ENCODE measurements at regions of chr7 and their contacts with region 1.

Region 1: GRCh38 chr7:16762177-16762576 is 8.6 kb downstream of the TSPAN13 start:
- DNase-seq: no peak
- H3K4me3 ChIP-seq: no peak overlapping the region
- CTCF ChIP-seq: no peak

Region 2: GRCh38 chr7:16670021-16670420 is 92.2 kb before region 1 on chr7:
- in situ Hi-C with region 1: loop called (anchors 5 kb)
- DNase-seq: no peak
- H3K4me3 ChIP-seq: no peak overlapping the region
- CTCF ChIP-seq: no peak

Measured in astrocyte of the cerebellum (primary cell).